AG04449 (cell line): ENCODE measurements at regions of chr13 and their contacts with region 1.

Region 1: GRCh38 chr13:44435142-44435982 is 61.7 kb downstream of the SERP2 start:
- DNase-seq: peak; percentile 82
- H3K4me3 ChIP-seq: peak overlapping the region; percentile 59
- CTCF ChIP-seq: no peak

Region 2: GRCh38 chr13:43915451-43915850 is 519.9 kb before region 1 on chr13:
- CTCF ChIA-PET with region 1: interaction called, 16 read pairs
- POLR2A ChIA-PET with region 1: no interaction called
- DNase-seq: no peak
- H3K4me3 ChIP-seq: no peak overlapping the region
- CTCF ChIP-seq: no peak

Region 3: DNA sequence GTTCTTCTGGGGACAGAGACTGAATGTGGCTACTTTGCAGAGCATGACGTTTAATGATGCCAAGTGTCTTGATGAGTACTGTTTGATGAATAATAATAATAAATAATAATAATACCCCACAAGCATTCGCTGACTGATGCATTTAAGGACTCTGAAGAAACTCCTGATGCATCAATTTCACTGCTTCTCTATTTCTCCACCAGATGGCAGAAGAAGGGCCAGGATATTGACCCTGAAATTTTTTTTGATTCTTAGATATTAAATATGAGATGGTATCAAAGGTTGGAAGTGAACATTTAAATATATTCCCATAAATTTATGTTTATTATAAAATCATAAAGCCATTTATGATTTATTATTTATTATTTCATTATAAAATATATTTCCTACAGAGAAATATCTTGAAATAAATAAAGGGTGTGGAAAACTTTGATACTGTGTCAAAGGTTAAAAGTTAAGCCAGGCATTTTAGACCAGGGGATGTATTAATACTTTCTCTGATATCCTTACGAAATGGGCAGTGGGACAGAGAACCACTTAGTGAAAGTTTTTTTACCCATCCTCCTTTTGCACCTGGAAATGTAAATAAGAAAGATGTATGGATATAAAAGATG is 384.8 kb before region 1 on chr13:
- CTCF ChIA-PET with region 1: interaction called, 39 read pairs
- POLR2A ChIA-PET with region 1: no interaction called
- DNase-seq: no peak
- H3K4me3 ChIP-seq: no peak overlapping the region
- CTCF ChIP-seq: peak; percentile 50

Region 4: GRCh38 chr13:44191504-44192171 is 243.7 kb before region 1 on chr13:
- CTCF ChIA-PET with region 1: interaction called, 41 read pairs
- POLR2A ChIA-PET with region 1: no interaction called
- DNase-seq: no peak
- H3K4me3 ChIP-seq: no peak overlapping the region
- CTCF ChIP-seq: peak; percentile 74

Region 5: GRCh38 chr13:44449999-44450708 is 14.8 kb after region 1 on chr13:
- CTCF ChIA-PET with region 1: interaction called, 14 read pairs
- POLR2A ChIA-PET with region 1: no interaction called
- DNase-seq: no peak
- H3K4me3 ChIP-seq: no peak overlapping the region
- CTCF ChIP-seq: no peak